CD8-positive, alpha-beta T cell (primary cell): ENCODE measurements at regions of chr15 and their contacts with region 1.

Region 1: GRCh38 chr15:25684521-25685431 is 178.4 kb downstream of the ATP10A start:
- DNase-seq: peak in 1 of 9 experiments; percentile 31
- ATAC-seq: no peak
- H3K4me3 ChIP-seq: no peak overlapping the region
- H3K4me3 Mint-ChIP-seq: no peak overlapping the region
- H3K27ac ChIP-seq: no peak overlapping the region
- H3K27ac Mint-ChIP-seq: no peak overlapping the region
- H3K4me1 ChIP-seq: no peaks in the 10 kb centered on the region
- H3K4me1 Mint-ChIP-seq: no peaks in the 10 kb centered on the region
- H3K27me3 ChIP-seq: no peaks in the 10 kb centered on the region
- H3K27me3 Mint-ChIP-seq: no peaks in the 10 kb centered on the region
- CTCF ChIP-seq: no peak

Region 2: DNA sequence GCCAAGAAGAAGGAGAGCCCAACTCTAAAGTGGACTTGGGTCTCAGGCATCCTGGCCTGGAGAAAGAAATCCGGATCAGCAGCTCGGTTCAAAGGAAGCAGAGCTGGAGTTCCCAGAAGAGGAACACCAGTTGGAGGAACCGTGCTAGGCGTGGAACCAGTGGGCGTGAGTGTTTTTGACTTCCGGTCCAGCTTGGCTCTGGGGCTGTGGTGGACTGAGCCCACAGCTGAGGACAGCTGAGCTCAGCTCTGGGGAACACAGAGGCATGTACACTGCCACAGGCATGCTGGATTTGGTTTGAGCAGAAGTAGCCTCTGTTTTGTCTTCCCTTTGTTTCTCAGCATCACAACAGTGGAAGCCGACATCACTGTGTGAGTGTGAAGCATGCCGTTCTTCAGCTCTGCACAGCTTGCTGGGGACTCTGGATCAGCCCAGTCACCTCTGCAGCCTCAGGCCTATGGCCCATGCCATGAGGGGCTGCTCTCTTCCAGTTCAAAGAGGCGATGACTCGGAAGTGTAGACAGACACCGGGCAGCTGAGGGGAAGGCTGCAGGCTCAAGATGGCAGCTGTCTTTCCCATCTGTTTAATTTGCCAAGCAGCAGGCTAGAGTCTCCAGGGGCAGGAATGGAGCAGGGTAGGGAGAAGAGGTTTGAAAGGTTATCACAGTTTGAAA is 60.1 kb before region 1 on chr15:
- CTCF ChIA-PET with region 1: no interaction called
- POLR2A ChIA-PET with region 1: no interaction called
- intact Hi-C with region 1: loop called in 1 of 2 experiments (anchors 10 kb)
- DNase-seq: no peak
- ATAC-seq: no peak
- H3K4me3 ChIP-seq: no peak overlapping the region
- H3K4me3 Mint-ChIP-seq: no peak overlapping the region
- H3K27ac ChIP-seq: no peak overlapping the region
- H3K27ac Mint-ChIP-seq: no peak overlapping the region
- H3K4me1 ChIP-seq: no peaks in the 10 kb centered on the region
- H3K4me1 Mint-ChIP-seq: no peaks in the 10 kb centered on the region
- H3K27me3 ChIP-seq: no peaks in the 10 kb centered on the region
- H3K27me3 Mint-ChIP-seq: no peaks in the 10 kb centered on the region
- CTCF ChIP-seq: no peak

Region 3: GRCh38 chr15:25727867-25728600 is 43.3 kb after region 1 on chr15:
- CTCF ChIA-PET with region 1: no interaction called
- POLR2A ChIA-PET with region 1: no interaction called
- intact Hi-C with region 1: no loop called
- DNase-seq: peak in 1 of 9 experiments; percentile 29
- ATAC-seq: no peak
- H3K4me3 ChIP-seq: no peak overlapping the region
- H3K4me3 Mint-ChIP-seq: no peak overlapping the region
- H3K27ac ChIP-seq: no peak overlapping the region
- H3K27ac Mint-ChIP-seq: no peak overlapping the region
- H3K4me1 ChIP-seq: no peaks in the 10 kb centered on the region
- H3K4me1 Mint-ChIP-seq: no peaks in the 10 kb centered on the region
- H3K27me3 ChIP-seq: no peaks in the 10 kb centered on the region
- H3K27me3 Mint-ChIP-seq: no peaks in the 10 kb centered on the region
- CTCF ChIP-seq: no peak

Region 4: GRCh38 chr15:26013981-26014380 is 329.2 kb after region 1 on chr15:
- CTCF ChIA-PET with region 1: no interaction called
- POLR2A ChIA-PET with region 1: no interaction called
- intact Hi-C with region 1: no loop called
- DNase-seq: no peak
- ATAC-seq: no peak
- H3K4me3 ChIP-seq: no peak overlapping the region
- H3K4me3 Mint-ChIP-seq: no peak overlapping the region
- H3K27ac ChIP-seq: no peak overlapping the region
- H3K27ac Mint-ChIP-seq: no peak overlapping the region
- H3K4me1 ChIP-seq: no peaks in the 10 kb centered on the region
- H3K4me1 Mint-ChIP-seq: no peaks in the 10 kb centered on the region
- H3K27me3 ChIP-seq: no peaks in the 10 kb centered on the region
- H3K27me3 Mint-ChIP-seq: peaks cover 19% of the 10 kb centered on the region
- CTCF ChIP-seq: no peak